Activated CD8-positive, alpha-beta T cell treated with anti-CD3 and anti-CD28 coated beads for 36 hours (primary cell): ENCODE measurements at regions of chr15 and their contacts with region 1.

Region 1: GRCh38 chr15:63752075-63752684 is 81.6 kb downstream of the HERC1 start:
- DNase-seq: peak; percentile 60
- ATAC-seq: peak; percentile 94
- H3K4me3 Mint-ChIP-seq: no peak overlapping the region
- H3K27ac Mint-ChIP-seq: peak overlapping the region; percentile 46
- H3K4me1 Mint-ChIP-seq: peaks cover 6% of the 10 kb centered on the region
- H3K27me3 Mint-ChIP-seq: no peaks in the 10 kb centered on the region
- CTCF ChIP-seq: peak; percentile 80

Region 2: DNA sequence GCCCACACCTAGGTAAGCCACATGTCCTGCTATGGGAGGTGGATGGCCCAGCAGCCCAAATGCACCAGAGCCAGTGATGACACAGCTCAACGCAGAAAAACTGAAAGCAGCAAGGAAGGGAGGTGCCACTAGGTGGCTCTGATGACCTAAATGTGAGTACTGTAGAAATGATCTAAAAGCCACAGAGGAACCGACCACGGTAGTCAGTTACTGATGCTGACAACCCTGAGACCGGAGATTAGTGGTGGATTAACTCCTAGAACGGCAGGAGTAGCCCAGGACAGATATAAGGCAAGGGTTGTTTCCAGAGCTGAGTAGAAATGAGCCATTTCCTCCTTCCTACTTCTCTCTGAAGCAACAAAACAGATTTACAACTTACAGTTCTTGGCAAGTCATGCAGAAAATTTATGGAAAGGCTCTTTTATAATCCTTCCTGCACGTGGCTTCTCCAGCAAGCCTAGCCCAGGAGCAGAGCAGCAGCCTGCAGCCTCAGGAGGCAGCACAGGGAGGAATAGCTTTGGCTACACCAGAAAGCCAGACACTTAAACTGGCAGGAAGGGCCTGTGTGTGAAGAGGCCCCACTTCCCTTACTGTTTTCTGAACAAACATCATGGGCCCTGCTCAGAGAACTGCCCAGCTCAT is 141.9 kb before region 1 on chr15:
- CTCF ChIA-PET with region 1: interaction called, 11 read pairs
- POLR2A ChIA-PET with region 1: no interaction called
- intact Hi-C with region 1: no loop called
- DNase-seq: peak; percentile 93
- ATAC-seq: peak; percentile 87
- H3K4me3 Mint-ChIP-seq: no peak overlapping the region
- H3K27ac Mint-ChIP-seq: peak overlapping the region; percentile 91
- H3K4me1 Mint-ChIP-seq: peaks cover 32% of the 10 kb centered on the region
- H3K27me3 Mint-ChIP-seq: no peaks in the 10 kb centered on the region
- CTCF ChIP-seq: peak; percentile 81

Region 3: GRCh38 chr15:63772520-63772919 is 20.3 kb after region 1 on chr15:
- CTCF ChIA-PET with region 1: interaction called, 24 read pairs
- POLR2A ChIA-PET with region 1: no interaction called
- intact Hi-C with region 1: no loop called
- DNase-seq: no peak
- ATAC-seq: no peak
- H3K4me3 Mint-ChIP-seq: no peak overlapping the region
- H3K27ac Mint-ChIP-seq: no peak overlapping the region
- H3K4me1 Mint-ChIP-seq: peaks cover 20% of the 10 kb centered on the region
- H3K27me3 Mint-ChIP-seq: no peaks in the 10 kb centered on the region
- CTCF ChIP-seq: no peak

Region 4: DNA sequence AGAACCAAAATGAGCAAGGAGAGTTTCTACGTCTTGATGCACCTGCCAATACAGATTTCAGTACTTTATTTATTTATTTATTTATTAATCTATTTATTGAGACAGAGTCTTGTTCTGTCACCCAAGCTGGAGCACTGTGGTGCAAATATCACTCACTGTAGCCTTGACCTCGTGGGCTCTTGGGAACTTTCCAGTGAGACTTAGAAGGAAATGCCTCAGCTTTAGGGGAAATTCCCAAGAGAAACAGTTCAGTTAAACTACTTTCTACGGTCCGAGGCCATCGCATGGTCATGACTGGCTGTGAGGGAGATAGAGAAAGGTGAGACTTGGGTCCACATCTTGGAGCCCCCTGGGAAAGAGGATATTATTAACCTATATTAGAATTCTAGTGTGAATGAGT is 128.6 kb after region 1 on chr15:
- CTCF ChIA-PET with region 1: no interaction called
- POLR2A ChIA-PET with region 1: no interaction called
- intact Hi-C with region 1: no loop called
- DNase-seq: no peak
- ATAC-seq: no peak
- H3K4me3 Mint-ChIP-seq: no peak overlapping the region
- H3K27ac Mint-ChIP-seq: no peak overlapping the region
- H3K4me1 Mint-ChIP-seq: peaks cover 4% of the 10 kb centered on the region
- H3K27me3 Mint-ChIP-seq: no peaks in the 10 kb centered on the region
- CTCF ChIP-seq: no peak

Region 5: DNA sequence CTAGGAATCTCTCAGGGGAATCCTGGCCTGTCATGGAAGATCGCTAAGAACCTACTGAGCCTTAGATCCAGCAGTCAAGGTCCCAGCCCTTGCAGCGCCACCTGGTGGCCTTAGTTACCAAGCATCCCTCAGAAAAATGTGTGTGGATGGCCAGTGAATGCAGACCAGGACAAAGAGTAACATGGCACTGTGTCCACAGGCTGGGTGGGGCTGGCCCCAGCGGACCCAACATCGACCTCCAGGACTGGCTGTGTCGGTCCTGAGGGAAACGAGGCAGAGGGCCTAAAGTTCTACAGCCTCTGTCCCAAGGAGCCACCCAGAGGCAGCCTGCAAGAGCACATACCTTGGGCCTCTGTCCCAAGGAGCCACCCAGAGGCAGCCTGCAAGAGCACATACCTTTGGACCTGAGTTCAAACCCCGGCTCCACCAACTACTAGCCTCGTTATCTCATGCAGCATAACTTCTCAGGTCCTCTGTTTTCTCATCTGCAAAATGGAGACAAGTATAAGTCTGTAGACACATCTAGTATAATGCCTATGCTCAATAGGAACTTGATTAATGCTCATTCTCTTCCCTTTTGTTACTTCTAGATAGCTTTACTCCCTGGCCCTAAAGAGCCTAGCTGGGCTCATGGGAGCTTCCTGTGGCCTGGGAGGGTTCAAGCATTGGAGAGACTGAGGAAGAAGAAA is 139.0 kb after region 1 on chr15:
- CTCF ChIA-PET with region 1: interaction called, 39 read pairs
- POLR2A ChIA-PET with region 1: no interaction called
- intact Hi-C with region 1: loop called (anchors 5 kb)
- DNase-seq: peak; percentile 88
- ATAC-seq: peak; percentile 19
- H3K4me3 Mint-ChIP-seq: no peak overlapping the region
- H3K27ac Mint-ChIP-seq: no peak overlapping the region
- H3K4me1 Mint-ChIP-seq: peaks cover 62% of the 10 kb centered on the region
- H3K27me3 Mint-ChIP-seq: no peaks in the 10 kb centered on the region
- CTCF ChIP-seq: peak; percentile 85

Region 6: GRCh38 chr15:64010719-64011118 is 258.5 kb after region 1 on chr15:
- CTCF ChIA-PET with region 1: interaction called, 18 read pairs
- POLR2A ChIA-PET with region 1: no interaction called
- intact Hi-C with region 1: no loop called
- DNase-seq: peak; percentile 95
- ATAC-seq: peak; percentile 88
- H3K4me3 Mint-ChIP-seq: peak overlapping the region; percentile 22
- H3K27ac Mint-ChIP-seq: peak overlapping the region; percentile 88
- H3K4me1 Mint-ChIP-seq: peaks cover 37% of the 10 kb centered on the region
- H3K27me3 Mint-ChIP-seq: no peaks in the 10 kb centered on the region
- CTCF ChIP-seq: no peak